PC-3 (cell line): ENCODE measurements at regions of chr1 and their contacts with region 1.

Region 1: DNA sequence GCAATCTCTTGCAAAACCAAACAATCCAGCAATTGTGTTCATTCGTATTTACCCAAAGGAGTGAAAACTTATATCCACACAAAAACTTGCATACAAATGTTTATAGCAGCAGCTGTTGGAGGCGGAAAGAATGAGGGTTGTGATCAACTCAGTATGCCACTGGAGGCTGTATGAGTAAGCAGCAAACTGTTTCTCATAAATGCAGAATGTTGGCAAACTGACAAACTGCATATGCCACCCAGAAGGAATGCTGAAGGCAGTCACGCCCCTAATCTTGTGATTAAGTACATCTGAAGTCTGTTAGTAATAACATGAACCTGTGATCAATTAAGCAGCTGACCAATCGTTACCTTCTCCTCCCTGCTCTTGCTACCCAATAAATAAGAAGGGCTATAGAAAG is 60.5 kb upstream of the CR2 start:
- DNase-seq: peak; percentile 100
- ATAC-seq: peak; percentile 74
- H3K4me3 ChIP-seq: peak overlapping the region; percentile 23; the same call in 1 of the 2 replicates
- H3K27ac ChIP-seq: peak overlapping the region; percentile 90
- H3K4me1 ChIP-seq: peaks cover 38% of the 10 kb centered on the region
- H3K27me3 ChIP-seq: no peaks in the 10 kb centered on the region
- CTCF ChIP-seq: no peak

Region 2: GRCh38 chr1:206878456-206878855 is 515.2 kb before region 1 on chr1:
- CTCF ChIA-PET with region 1: no interaction called
- POLR2A ChIA-PET with region 1: no interaction called
- intact Hi-C with region 1: no loop called
- DNase-seq: peak; percentile 40
- ATAC-seq: no peak; the same call in 1 of the 2 replicates
- H3K4me3 ChIP-seq: no peak overlapping the region
- H3K27ac ChIP-seq: no peak overlapping the region
- H3K4me1 ChIP-seq: no peaks in the 10 kb centered on the region
- H3K27me3 ChIP-seq: no peaks in the 10 kb centered on the region
- CTCF ChIP-seq: peak; percentile 67

Region 3: DNA sequence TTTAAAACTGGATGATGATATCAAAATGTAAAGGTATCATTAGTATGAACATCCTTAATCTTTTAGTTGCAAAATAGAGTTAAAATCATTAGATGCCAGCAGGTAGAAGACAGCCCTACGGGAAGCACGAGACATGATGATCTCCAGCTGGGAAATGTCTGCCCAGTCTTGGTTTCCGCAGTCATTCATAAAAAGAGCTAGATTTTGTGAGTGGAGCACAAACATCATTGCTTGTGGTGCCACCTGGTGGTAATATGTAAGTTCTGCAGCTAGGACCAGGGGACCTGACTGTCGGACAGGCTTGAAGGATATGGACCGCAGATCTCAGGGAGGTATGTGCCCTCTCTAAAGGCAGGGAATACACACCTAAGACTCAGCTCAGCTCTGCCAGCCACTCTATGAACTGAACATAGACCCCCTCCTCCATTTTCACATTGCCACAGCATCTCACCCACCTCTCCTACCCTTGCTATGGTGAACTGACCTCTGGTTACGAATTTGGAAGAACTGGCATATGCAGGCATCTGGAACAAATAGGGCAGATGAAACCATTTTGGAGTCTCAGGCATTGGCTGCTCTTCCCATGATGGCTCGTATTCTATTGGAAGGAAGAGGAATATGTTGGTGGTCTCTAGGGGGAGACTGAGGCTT is 481.0 kb before region 1 on chr1:
- CTCF ChIA-PET with region 1: no interaction called
- POLR2A ChIA-PET with region 1: no interaction called
- intact Hi-C with region 1: no loop called
- DNase-seq: peak; percentile 98
- ATAC-seq: peak; percentile 32
- H3K4me3 ChIP-seq: no peak overlapping the region
- H3K27ac ChIP-seq: peak overlapping the region; percentile 13
- H3K4me1 ChIP-seq: peaks cover 37% of the 10 kb centered on the region
- H3K27me3 ChIP-seq: no peaks in the 10 kb centered on the region
- CTCF ChIP-seq: peak; percentile 99

Region 4: DNA sequence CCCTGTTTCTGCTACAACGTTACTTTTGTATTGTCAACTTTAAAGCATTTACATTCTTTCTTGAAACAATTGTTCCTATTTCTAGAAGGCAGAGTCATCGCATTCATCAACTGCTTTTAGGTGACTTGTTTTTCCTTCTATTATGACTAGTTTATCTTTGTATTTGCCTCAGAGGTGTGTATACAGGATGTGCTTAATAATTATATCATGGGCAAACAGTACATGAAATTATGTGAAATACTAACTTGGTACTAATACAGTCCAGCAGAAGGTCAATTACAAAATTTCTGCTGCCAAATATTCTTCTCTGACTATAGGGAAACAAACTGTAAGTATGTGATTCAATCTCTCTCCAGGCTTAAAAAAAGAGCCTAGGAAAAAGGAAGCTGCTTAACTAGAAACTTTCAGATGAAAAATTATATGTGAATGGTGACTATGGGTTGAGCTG is 188.0 kb before region 1 on chr1:
- CTCF ChIA-PET with region 1: no interaction called
- POLR2A ChIA-PET with region 1: no interaction called
- intact Hi-C with region 1: loop called (anchors 1 kb)
- DNase-seq: peak; percentile 31
- ATAC-seq: peak; percentile 30
- H3K4me3 ChIP-seq: no peak overlapping the region
- H3K27ac ChIP-seq: peak overlapping the region; percentile 74
- H3K4me1 ChIP-seq: peaks cover 14% of the 10 kb centered on the region
- H3K27me3 ChIP-seq: no peaks in the 10 kb centered on the region
- CTCF ChIP-seq: no peak

Region 5: GRCh38 chr1:207304710-207305151 is 88.9 kb before region 1 on chr1:
- CTCF ChIA-PET with region 1: no interaction called
- POLR2A ChIA-PET with region 1: no interaction called
- intact Hi-C with region 1: loop called (anchors 1 kb)
- DNase-seq: peak; percentile 99
- ATAC-seq: peak; percentile 88
- H3K4me3 ChIP-seq: no peak overlapping the region
- H3K27ac ChIP-seq: peak overlapping the region; percentile 89
- H3K4me1 ChIP-seq: peaks cover 38% of the 10 kb centered on the region
- H3K27me3 ChIP-seq: no peaks in the 10 kb centered on the region
- CTCF ChIP-seq: no peak

Region 6: GRCh38 chr1:207336559-207337467 is 56.8 kb before region 1 on chr1:
- CTCF ChIA-PET with region 1: no interaction called
- POLR2A ChIA-PET with region 1: no interaction called
- intact Hi-C with region 1: loop called (anchors 1 kb)
- DNase-seq: peak; percentile 97
- ATAC-seq: peak; percentile 98
- H3K4me3 ChIP-seq: no peak overlapping the region
- H3K27ac ChIP-seq: peak overlapping the region; percentile 74
- H3K4me1 ChIP-seq: peaks cover 21% of the 10 kb centered on the region
- H3K27me3 ChIP-seq: no peaks in the 10 kb centered on the region
- CTCF ChIP-seq: no peak

Region 7: GRCh38 chr1:207352554-207352953 is 41.1 kb before region 1 on chr1:
- CTCF ChIA-PET with region 1: no interaction called
- POLR2A ChIA-PET with region 1: interaction called, 7 read pairs
- intact Hi-C with region 1: loop called (anchors 1 kb)
- DNase-seq: no peak
- ATAC-seq: peak; percentile 67
- H3K4me3 ChIP-seq: no peak overlapping the region
- H3K27ac ChIP-seq: no peak overlapping the region
- H3K4me1 ChIP-seq: peaks cover 6% of the 10 kb centered on the region
- H3K27me3 ChIP-seq: no peaks in the 10 kb centered on the region
- CTCF ChIP-seq: no peak

Region 8: GRCh38 chr1:207374887-207375286 is 18.7 kb before region 1 on chr1:
- CTCF ChIA-PET with region 1: no interaction called
- POLR2A ChIA-PET with region 1: interaction called, 6 read pairs
- intact Hi-C with region 1: loop called (anchors 2 kb)
- DNase-seq: no peak
- ATAC-seq: no peak
- H3K4me3 ChIP-seq: no peak overlapping the region
- H3K27ac ChIP-seq: no peak overlapping the region
- H3K4me1 ChIP-seq: no peaks in the 10 kb centered on the region
- H3K27me3 ChIP-seq: no peaks in the 10 kb centered on the region
- CTCF ChIP-seq: no peak